Body of pancreas (tissue), 4 donors: ENCODE measurements at regions of chr17 and their contacts with region 1.

Region 1: GRCh38 chr17:43169561-43170139 is 1.4 kb upstream of the NBR1 start:
- DNase-seq: peak in 3 of 4 donors; percentile 54 to 68 (median 57)
- ATAC-seq: peak; percentile 36
- H3K4me3 ChIP-seq: peak overlapping the region; percentile 83 to 92
- H3K27ac ChIP-seq: peak overlapping the region; percentile 95 to 99 (median 96)
- H3K4me1 ChIP-seq: peaks cover 32% of the 10 kb centered on the region
- H3K27me3 ChIP-seq: no peaks in the 10 kb centered on the region
- CTCF ChIP-seq: no peak
- POLR2A ChIP-seq: no peak

Region 2: DNA sequence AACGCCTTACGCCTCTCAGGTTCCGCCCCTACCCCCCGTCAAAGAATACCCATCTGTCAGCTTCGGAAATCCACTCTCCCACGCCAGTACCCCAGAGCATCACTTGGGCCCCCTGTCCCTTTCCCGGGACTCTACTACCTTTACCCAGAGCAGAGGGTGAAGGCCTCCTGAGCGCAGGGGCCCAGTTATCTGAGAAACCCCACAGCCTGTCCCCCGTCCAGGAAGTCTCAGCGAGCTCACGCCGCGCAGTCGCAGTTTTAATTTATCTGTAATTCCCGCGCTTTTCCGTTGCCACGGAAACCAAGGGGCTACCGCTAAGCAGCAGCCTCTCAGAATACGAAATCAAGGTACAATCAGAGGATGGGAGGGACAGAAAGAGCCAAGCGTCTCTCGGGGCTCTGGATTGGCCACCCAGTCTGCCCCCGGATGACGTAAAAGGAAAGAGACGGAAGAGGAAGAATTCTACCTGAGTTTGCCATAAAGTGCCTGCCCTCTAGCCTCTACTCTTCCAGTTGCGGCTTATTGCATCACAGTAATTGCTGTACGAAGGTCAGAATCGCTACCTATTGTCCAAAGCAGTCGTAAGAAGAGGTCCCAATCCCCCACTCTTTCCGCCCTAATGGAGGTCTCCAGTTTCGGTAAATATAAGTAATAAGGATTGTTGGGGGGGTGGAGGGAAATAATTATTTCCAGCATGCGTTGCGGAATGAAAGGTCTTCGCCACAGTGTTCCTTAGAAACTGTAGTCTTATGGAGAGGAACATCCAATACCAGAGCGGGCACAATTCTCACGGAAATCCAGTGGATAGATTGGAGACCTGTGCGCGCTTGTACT is 44.3 kb before region 1 on chr17 and contains the start of gene BRCA1:
- intact Hi-C with region 1: loop called (anchors 5 kb)
- DNase-seq: peak; percentile 95 to 99 (median 96)
- ATAC-seq: peak; percentile 97
- H3K4me3 ChIP-seq: peak within 1 kb of the TSS; percentile 72 to 90
- H3K27ac ChIP-seq: peak within 1 kb of the TSS; percentile 65 to 89 (median 83)
- H3K4me1 ChIP-seq: peaks cover 46% of the 10 kb centered on the region
- H3K27me3 ChIP-seq: no peaks in the 10 kb centered on the region
- CTCF ChIP-seq: no peak
- POLR2A ChIP-seq: peak in 2 of 3 donors; percentile 85 to 87
- total RNA-seq, gene BRCA1: 2.6 to 7.6 TPM